Heart right ventricle (tissue), 16 donors: ENCODE measurements at regions of chr6 and their contacts with region 1.

Region 1: GRCh38 chr6:159104163-159104925 is 59.6 kb upstream of the TAGAP start:
- DNase-seq: peak; percentile 43 to 62
- ATAC-seq: peak; percentile 79 to 91 (median 86)
- H3K4me3 ChIP-seq: no peak overlapping the region
- H3K27ac ChIP-seq: peak overlapping the region in 1 of 10 donors; percentile 11
- H3K4me1 ChIP-seq: peaks cover 0 to 44% (median 8%) of the 10 kb centered on the region in 9 donors
- H3K27me3 ChIP-seq: peaks cover 0 to 18% (median 0%) of the 10 kb centered on the region in 7 donors
- CTCF ChIP-seq: peak; percentile 39 to 96 (median 82)

Region 2: GRCh38 chr6:158999666-159000403 is 104.5 kb before region 1 on chr6 and contains the start of gene RSPH3:
- intact Hi-C with region 1: loop called in 3 of 10 experiments (anchors 5 to 10 kb)
- DNase-seq: peak; percentile 90 to 92
- ATAC-seq: peak; percentile 94 to 98 (median 97)
- H3K4me3 ChIP-seq: peak within 1 kb of the TSS; percentile 51 to 90 (median 74)
- H3K27ac ChIP-seq: peak within 1 kb of the TSS; percentile 19 to 90 (median 82)
- H3K4me1 ChIP-seq: peaks cover 4 to 42% (median 9%) of the 10 kb centered on the region in 9 donors
- H3K27me3 ChIP-seq: no peaks in the 10 kb centered on the region
- CTCF ChIP-seq: peak in 3 of 9 donors; percentile 38 to 47 (median 41)
- total RNA-seq, gene RSPH3: 7.2 to 11.7 (median 10.3) TPM

Region 3: DNA sequence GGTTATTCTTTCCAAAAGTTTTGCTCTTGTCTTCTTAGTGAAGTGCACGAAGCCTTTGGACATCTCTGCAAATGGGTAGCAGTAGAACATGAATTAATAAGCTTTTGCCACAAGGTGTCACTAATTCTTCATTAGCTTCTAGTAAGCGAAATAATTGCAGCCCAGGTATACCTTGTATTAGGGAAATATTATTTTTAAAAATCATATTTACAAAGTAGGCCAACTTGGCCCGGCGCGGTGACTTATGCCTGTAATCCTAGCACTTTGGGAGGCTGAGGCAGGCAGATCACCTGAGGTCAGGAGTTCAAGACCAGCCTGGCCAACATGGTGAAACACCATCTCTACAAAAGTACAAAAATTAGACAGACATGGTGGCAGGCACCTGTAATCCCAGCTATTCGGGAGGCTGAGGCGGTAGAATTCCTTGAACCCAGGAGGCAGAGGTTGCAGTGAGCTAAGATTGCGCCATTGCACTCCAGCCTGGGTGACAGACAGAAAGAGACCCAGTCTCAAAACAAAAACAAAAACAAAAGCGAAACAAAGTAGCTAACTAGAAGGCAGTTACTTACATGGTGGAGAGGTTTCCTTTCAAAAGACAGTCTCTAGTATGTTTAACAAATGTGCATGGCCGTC is 95.6 kb before region 1 on chr6:
- intact Hi-C with region 1: loop called in 3 of 10 experiments (anchors 5 to 10 kb)
- DNase-seq: no peak
- ATAC-seq: peak in 5 of 8 donors; percentile 22 to 58 (median 47)
- H3K4me3 ChIP-seq: peak overlapping the region in 1 of 10 donors; percentile 20
- H3K27ac ChIP-seq: peak overlapping the region in 1 of 10 donors; percentile 46
- H3K4me1 ChIP-seq: peaks cover 0 to 30% (median 0%) of the 10 kb centered on the region in 9 donors
- H3K27me3 ChIP-seq: no peaks in the 10 kb centered on the region
- CTCF ChIP-seq: peak; percentile 15 to 58 (median 48)

Region 4: DNA sequence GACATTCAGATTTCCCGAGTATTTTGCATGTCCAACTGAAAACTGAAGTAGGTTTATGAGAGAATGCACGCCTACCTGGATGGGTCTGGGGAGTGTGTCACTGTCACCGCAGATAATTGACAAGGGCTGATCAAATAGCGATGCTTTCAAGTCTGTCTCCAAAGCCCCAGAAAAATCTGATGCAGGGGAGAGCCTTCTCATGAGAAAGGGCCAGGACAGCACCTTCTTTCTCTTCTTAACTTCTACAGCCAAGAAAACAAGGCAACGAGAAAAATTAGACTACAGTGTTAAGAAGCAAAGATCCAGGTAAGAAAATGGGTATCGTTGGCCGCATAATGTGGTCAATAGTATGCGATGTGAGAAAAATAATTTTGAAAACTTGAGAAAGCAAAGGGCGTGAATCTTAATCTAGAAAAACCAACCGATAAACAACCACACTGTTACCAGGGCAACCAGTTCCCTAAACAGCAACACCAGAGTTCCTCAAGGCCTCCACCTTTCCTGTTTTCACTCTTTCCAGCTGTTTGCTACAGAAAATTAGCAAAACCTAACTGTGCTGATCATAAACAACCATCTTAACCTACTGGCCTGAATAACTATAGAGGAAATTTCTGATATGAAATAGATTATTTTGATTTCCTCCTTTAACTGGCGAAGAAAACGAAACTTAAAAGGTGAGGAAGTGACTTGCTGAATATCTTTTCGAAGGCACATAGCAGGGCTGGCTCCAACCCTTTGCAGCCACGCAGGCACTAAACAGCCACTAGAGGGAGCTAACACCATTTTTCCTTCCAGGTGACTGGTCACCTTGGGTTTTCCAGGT is 62.1 kb before region 1 on chr6:
- intact Hi-C with region 1: loop called in 8 of 10 experiments (anchors 2 to 10 kb)
- DNase-seq: peak in 1 of 2 donors; percentile 59
- ATAC-seq: peak; percentile 68 to 83 (median 76)
- H3K4me3 ChIP-seq: peak overlapping the region in 6 of 10 donors; percentile 10 to 66 (median 27)
- H3K27ac ChIP-seq: peak overlapping the region in 5 of 10 donors; percentile 18 to 90 (median 30)
- H3K4me1 ChIP-seq: peaks cover 0 to 60% (median 7%) of the 10 kb centered on the region in 9 donors
- H3K27me3 ChIP-seq: no peaks in the 10 kb centered on the region
- CTCF ChIP-seq: peak; percentile 70 to 97 (median 93)

Region 5: GRCh38 chr6:159282421-159282820 is 178.1 kb after region 1 on chr6:
- intact Hi-C with region 1: no loop called
- DNase-seq: no peak
- ATAC-seq: no peak
- H3K4me3 ChIP-seq: no peak overlapping the region
- H3K27ac ChIP-seq: no peak overlapping the region
- H3K4me1 ChIP-seq: peaks cover 0 to 8% (median 0%) of the 10 kb centered on the region in 9 donors
- H3K27me3 ChIP-seq: peaks cover 0 to 6% (median 0%) of the 10 kb centered on the region in 7 donors
- CTCF ChIP-seq: no peak